Mammary epithelial cell (primary cell): ENCODE measurements at regions of chr3 and their contacts with region 1.

Region 1: DNA sequence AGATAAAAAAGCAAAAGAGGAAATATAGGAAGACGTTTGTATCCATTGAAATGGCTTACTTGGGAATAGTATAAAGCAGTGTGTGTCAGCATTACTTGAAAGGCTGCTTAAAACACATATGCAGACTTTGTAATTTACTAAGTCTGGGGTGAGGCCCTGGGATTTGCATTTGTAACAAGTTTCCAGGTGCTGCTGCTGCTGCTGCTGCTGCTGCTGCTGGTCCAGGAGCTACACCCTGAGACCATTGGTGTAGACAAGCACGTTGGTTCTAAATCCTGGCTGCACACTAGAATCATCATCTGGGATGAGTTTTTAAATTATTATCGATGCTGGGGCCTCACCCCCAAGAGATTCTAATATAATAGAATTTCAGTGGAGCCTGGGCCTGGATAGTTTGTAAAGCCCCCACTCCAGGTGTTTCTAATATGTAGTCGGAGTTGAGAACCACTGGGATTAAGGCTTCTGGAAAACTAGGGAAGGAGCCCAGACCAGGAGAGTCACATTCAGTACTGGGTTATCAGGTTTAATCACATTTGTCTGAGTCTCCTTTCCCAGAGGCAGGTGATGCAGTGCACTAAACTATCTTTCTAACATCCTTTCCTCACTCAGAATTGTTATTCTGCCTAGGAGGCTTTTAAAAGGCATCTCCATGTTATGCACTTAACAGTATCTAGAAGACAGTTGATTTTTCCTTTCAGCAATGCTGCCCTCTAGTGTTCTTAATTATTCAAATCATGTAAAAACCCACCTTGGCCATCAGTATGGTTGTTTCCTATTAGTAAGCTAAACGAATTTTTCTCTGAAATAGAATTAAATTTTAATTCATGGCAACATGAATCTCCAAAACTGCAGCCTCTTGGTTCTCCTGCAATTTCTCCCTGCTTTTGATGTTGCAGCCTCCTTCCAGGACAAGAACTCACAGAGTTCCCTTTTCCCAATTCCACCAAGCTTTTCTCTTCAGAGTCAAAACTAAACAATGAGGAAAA is 45.4 kb downstream of the SSR3 start:
- DNase-seq: peak; percentile 44
- H3K4me3 ChIP-seq: no peak overlapping the region
- H3K27ac ChIP-seq: no peak overlapping the region
- H3K4me1 ChIP-seq: no peaks in the 10 kb centered on the region
- H3K27me3 ChIP-seq: peaks cover 2% of the 10 kb centered on the region
- CTCF ChIP-seq: peak; percentile 36 to 57

Region 2: GRCh38 chr3:155995525-155996351 is 513.7 kb before region 1 on chr3:
- CTCF ChIA-PET with region 1: no interaction called
- dilution Hi-C with region 1: no loop called
- in situ Hi-C with region 1: no loop called
- intact Hi-C with region 1: loop called (anchors 5 kb)
- DNase-seq: peak; percentile 43
- H3K4me3 ChIP-seq: no peak overlapping the region
- H3K27ac ChIP-seq: no peak overlapping the region
- H3K4me1 ChIP-seq: peaks cover 15% of the 10 kb centered on the region
- H3K27me3 ChIP-seq: no peaks in the 10 kb centered on the region
- CTCF ChIP-seq: peak; percentile 53 to 62

Region 3: DNA sequence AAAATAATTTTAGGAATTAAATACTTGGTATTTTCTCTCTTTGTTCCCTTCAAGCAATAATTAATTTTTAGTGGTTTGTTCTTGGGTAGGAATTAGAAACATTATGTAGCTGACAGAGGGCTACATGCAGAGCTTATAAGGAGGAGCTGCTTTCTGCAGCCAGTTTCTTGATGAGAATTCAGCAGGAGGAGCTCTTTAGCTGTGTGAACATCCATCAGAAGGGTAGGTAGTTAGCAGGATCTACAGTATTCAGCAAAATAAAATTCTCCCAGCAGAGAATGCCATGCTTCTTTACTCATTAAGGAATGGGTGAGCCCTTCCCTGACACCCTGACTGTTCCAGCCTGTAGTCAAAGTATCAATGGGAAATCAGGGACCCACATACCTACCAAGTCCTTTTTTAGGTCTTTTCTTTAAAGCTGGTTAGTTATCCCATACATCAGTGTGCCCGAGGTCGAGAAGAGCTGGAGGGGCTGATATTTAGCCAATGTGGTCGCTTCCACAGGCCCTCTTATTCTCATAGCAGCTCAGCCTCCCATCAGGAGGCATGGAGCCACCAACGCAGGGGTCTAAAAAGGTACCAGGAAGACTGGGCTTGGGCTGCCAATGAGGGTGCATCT is 335.1 kb before region 1 on chr3:
- CTCF ChIA-PET with region 1: interaction called, 4 read pairs
- dilution Hi-C with region 1: no loop called
- in situ Hi-C with region 1: no loop called
- intact Hi-C with region 1: loop called (anchors 1 kb)
- DNase-seq: peak; percentile 44
- H3K4me3 ChIP-seq: no peak overlapping the region
- H3K27ac ChIP-seq: no peak overlapping the region
- H3K4me1 ChIP-seq: peaks cover 7% of the 10 kb centered on the region
- H3K27me3 ChIP-seq: no peaks in the 10 kb centered on the region
- CTCF ChIP-seq: peak; percentile 26 to 70

Region 4: DNA sequence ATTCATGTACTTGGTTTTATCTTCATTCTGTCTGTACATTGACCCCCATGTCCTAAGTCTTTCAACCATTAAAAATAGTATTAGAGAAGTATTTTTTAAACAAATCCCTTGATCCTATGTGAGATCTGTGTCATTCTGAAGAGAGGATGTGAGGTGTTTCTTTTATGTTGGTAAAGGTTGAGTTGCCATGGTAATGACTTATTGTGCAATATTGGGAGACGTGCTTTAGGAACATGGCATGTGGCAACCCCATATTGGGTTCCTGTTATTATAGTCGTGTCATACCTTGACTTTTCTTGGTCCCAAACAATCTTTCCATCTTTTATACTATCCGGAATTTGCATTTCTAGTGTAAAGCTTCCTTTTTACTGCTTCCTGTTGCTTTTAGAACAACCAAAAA is 186.0 kb before region 1 on chr3:
- CTCF ChIA-PET with region 1: no interaction called
- dilution Hi-C with region 1: no loop called
- in situ Hi-C with region 1: no loop called
- intact Hi-C with region 1: no loop called
- DNase-seq: peak; percentile 60
- H3K4me3 ChIP-seq: no peak overlapping the region
- H3K27ac ChIP-seq: no peak overlapping the region
- H3K4me1 ChIP-seq: no peaks in the 10 kb centered on the region
- H3K27me3 ChIP-seq: no peaks in the 10 kb centered on the region
- CTCF ChIP-seq: no peak

Region 5: GRCh38 chr3:156382458-156383346 is 126.8 kb before region 1 on chr3:
- CTCF ChIA-PET with region 1: no interaction called
- dilution Hi-C with region 1: no loop called
- in situ Hi-C with region 1: no loop called
- intact Hi-C with region 1: loop called (anchors 1 kb)
- DNase-seq: peak; percentile 20
- H3K4me3 ChIP-seq: no peak overlapping the region
- H3K27ac ChIP-seq: no peak overlapping the region
- H3K4me1 ChIP-seq: no peaks in the 10 kb centered on the region
- H3K27me3 ChIP-seq: no peaks in the 10 kb centered on the region
- CTCF ChIP-seq: peak; percentile 74 to 79

Region 6: DNA sequence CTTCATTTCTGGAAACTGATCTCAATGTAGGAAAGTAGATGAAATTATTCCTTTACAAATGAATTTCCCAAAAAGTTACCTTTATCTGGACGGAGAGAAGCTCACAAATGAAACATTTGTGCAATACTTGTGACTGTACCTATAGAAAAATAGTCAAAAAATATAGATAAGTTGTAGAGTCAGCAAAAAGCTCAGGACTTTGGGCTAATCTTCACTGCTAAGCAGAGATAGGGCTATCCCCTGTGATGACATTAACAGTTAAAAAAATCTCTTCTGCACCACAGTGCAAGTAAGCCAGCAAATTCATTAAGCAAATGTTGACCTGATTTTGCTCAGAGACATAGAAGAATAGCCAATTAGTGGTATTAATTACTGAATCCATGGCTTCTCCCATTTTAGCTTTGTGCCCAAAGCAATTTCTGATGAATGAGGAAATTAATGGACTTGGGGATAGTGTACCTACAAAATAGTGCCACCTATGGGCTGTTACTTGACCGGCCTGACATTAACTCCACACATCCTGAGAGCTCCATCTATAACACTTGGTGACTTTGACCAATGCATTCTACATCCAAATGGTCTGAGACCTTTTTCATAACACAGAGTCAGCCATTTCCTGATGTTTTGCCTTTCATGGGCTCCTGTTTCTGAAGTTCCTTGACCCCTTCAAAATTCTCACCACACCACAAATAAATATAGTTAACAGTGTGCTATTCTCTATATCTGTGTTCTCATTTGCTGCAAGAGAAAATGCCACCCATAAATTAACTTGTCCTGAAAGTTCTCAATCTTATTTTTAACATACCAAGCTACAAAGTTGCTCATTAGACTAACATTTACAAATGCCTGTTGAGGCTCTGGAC is 59.5 kb before region 1 on chr3:
- CTCF ChIA-PET with region 1: interaction called, 5 read pairs
- dilution Hi-C with region 1: no loop called
- in situ Hi-C with region 1: no loop called
- intact Hi-C with region 1: loop called (anchors 1 kb)
- DNase-seq: peak; percentile 28
- H3K4me3 ChIP-seq: no peak overlapping the region
- H3K27ac ChIP-seq: no peak overlapping the region
- H3K4me1 ChIP-seq: no peaks in the 10 kb centered on the region
- H3K27me3 ChIP-seq: peaks cover 3% of the 10 kb centered on the region
- CTCF ChIP-seq: peak; percentile 79 to 82

Region 7: DNA sequence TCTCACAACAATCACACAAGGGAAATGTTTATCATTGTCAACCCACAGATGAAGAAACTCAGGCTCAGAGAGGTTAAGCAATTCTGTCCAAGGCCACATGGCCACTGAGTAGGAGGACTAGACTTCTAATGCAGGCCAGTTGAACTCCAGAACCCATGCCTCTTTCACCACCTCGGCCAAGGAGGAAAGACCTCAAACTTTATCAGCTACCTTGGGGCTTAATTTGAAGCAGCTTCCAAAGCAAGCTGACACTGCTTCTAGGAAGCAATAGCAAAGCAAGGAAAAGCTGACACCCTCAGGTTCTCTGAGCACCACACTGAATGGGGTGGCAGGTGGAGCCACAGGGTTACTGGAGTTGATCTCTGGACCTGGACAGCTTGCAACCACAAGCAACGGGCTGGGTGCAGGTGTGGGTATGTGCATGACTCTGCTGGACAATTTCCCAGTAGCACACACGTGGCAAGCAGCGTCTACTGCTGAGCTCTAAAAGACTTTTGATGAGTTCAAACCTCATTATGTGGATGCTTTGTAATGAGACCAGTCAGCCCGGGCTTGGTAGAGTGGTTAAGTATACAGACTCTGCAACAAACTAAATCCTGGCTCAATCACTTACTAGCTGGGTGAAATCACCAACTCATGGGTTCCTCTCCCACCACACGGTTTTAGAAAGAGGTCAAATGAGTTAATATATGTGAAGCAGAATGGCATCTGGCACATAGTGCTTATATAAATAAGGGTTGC is 627.3 kb after region 1 on chr3:
- CTCF ChIA-PET with region 1: no interaction called
- dilution Hi-C with region 1: no loop called
- in situ Hi-C with region 1: no loop called
- intact Hi-C with region 1: loop called (anchors 1 kb)
- DNase-seq: peak; percentile 81
- H3K4me3 ChIP-seq: no peak overlapping the region
- H3K27ac ChIP-seq: peak overlapping the region; percentile 56
- H3K4me1 ChIP-seq: peaks cover 52% of the 10 kb centered on the region
- H3K27me3 ChIP-seq: no peaks in the 10 kb centered on the region
- CTCF ChIP-seq: no peak